ENCODE measurements at regions of chrX and their contacts with region 1.

Region 1: GRCh38 chrX:40083120-40083978 is 14.4 kb downstream of the BCOR start:
- DNase-seq: peak in 1 of 2 donors; percentile 67
- ATAC-seq: peak; percentile 37 to 64 (median 48)
- H3K4me3 ChIP-seq: peak overlapping the region; percentile 62
- H3K27ac ChIP-seq: no peak overlapping the region
- H3K4me1 ChIP-seq: peaks cover 21% of the 10 kb centered on the region
- H3K27me3 ChIP-seq: peaks cover 0 to 48% (median 0%) of the 10 kb centered on the region in 3 donors
- CTCF ChIP-seq: peak; percentile 6

Region 2: DNA sequence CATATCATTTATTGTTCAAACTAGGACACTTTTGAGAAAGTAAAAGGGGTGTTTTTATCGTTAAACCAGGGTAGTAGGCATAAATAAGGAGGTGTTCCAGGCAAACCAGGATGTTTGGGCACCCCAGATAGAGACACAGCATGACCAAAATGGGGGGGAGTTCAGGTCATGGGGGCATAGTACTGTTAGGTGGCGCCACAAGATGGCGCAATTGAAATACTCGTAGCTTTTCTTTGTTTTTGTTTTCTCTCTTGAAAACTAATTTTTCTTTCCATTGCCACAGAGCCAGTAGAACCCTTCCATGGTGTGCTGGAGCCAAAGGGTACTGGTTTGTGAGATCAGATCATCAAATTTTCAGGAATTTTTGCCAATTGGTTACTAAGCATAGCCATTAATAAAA is 269.0 kb before region 1 on chrX:
- intact Hi-C with region 1: loop called in 1 of 2 experiments (anchors 10 kb)
- DNase-seq: peak in 1 of 2 donors; percentile 44
- ATAC-seq: peak; percentile 50 to 70 (median 56)
- H3K4me3 ChIP-seq: no peak overlapping the region
- H3K27ac ChIP-seq: peak overlapping the region; percentile 27
- H3K4me1 ChIP-seq: no peaks in the 10 kb centered on the region
- H3K27me3 ChIP-seq: peaks cover 0 to 15% (median 0%) of the 10 kb centered on the region in 3 donors
- CTCF ChIP-seq: peak; percentile 39

Region 3: DNA sequence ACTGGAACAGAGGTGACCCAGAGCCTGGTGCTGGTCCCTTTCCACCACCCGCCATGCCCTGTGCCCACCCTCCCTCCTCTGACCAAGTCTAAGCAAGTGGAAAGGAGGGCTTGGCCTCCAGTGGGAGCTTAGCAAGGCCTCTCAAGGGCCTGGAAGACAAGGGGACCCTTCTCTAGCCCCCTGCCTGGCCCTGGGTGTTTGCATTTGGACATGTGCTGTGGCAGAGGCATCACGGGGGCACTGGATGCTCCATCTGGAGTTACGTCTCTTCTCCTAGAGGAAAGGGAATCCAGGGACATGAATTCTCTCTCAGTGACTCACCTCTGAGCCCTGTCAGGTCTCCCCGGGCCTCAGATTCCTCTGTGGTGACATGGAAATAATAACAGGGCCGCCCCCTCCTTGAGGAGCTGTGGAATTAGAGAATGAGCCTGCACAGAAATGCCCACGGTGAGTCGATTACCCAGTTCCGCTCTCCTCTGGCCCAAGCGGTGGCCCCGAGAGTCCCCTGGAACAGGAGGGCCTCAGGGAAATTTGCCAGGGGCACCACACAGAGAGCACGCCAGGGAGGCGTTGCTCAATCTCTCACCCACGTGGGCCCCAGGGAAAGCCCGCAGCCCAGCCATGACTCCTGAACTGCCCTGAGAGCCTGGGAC is 175.3 kb before region 1 on chrX:
- intact Hi-C with region 1: loop called in 1 of 2 experiments (anchors 5 kb)
- DNase-seq: peak; percentile 73 to 84
- ATAC-seq: peak; percentile 92 to 96 (median 93)
- H3K4me3 ChIP-seq: peak overlapping the region; percentile 16
- H3K27ac ChIP-seq: peak overlapping the region; percentile 73
- H3K4me1 ChIP-seq: no peaks in the 10 kb centered on the region
- H3K27me3 ChIP-seq: peaks cover 0 to 13% (median 0%) of the 10 kb centered on the region in 3 donors
- CTCF ChIP-seq: no peak

Region 4: DNA sequence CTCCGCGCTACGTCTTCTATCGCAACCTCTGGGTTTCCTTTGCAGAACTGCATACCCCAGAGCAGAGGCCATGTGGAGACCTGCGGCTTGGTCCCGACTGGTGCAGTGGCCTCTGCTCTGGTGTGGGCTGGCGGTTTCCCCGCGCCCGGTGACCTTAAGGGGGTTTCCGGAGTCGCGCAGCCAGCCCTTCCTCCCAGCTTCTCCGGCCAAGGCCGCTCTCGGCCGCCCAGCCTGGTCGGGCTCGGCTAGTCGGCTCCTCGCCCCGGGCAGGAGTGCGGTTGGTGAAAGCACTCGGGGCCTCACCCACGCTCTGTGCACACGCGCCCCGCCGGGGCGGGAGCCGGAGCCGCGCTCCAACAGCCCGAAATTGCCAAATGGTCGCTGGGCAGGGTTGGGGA is 70.5 kb before region 1 on chrX:
- intact Hi-C with region 1: no loop called
- DNase-seq: peak; percentile 59 to 74
- ATAC-seq: peak; percentile 30 to 46 (median 38)
- H3K4me3 ChIP-seq: peak overlapping the region; percentile 72
- H3K27ac ChIP-seq: peak overlapping the region; percentile 92
- H3K4me1 ChIP-seq: peaks cover 6% of the 10 kb centered on the region
- H3K27me3 ChIP-seq: peaks cover 0 to 76% (median 0%) of the 10 kb centered on the region in 3 donors
- CTCF ChIP-seq: no peak

Measured in psoas muscle (tissue), 8 donors.